Activated CD4-positive, alpha-beta T cell treated with anti-CD3 and anti-CD28 coated beads, Interleukin-2, amount 10 ng/mL, durations not matched to agents 24 days and 14 days (primary cell): ENCODE measurements at regions of chr7 and their contacts with region 1.

Region 1: GRCh38 chr7:102404005-102404861 is 8.1 kb downstream of the PRKRIP1 start:
- DNase-seq: peak; percentile 84
- H3K4me3 Mint-ChIP-seq: no peak overlapping the region
- H3K27ac Mint-ChIP-seq: peak overlapping the region; percentile 41
- H3K4me1 Mint-ChIP-seq: peaks cover 10% of the 10 kb centered on the region
- H3K27me3 Mint-ChIP-seq: no peaks in the 10 kb centered on the region

Region 2: GRCh38 chr7:102450242-102450641 is 46.0 kb after region 1 on chr7:
- intact Hi-C with region 1: loop called (anchors 1 kb)
- DNase-seq: peak; percentile 78
- H3K4me3 Mint-ChIP-seq: no peak overlapping the region
- H3K27ac Mint-ChIP-seq: no peak overlapping the region
- H3K4me1 Mint-ChIP-seq: no peaks in the 10 kb centered on the region
- H3K27me3 Mint-ChIP-seq: no peaks in the 10 kb centered on the region